AG04450 (cell line): ENCODE measurements at regions of chr6 and their contacts with region 1.

Region 1: DNA sequence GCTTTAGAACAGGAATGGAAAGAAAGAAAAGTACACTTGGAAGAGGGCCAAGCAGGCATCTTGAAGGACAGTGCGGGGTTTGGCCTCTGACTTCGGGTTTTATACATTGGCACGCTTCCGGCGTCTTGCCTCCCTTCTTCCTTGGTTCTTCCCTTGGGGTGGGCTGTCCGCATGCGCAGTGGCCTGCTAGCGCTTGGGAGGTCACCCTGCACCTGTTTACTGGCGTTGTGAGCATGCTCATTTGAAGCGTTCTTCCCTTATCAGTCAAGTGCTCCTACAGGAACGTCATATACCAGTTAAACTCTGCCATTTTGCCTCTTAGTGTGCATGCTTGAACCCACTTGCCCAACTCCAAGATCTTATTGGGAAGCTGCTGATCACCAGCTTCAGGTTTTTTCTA is 230.0 kb downstream of the TTLL2 start:
- DNase-seq: no peak
- H3K4me3 ChIP-seq: no peak overlapping the region
- H3K27ac ChIP-seq: no peak overlapping the region
- H3K27me3 ChIP-seq: no peaks in the 10 kb centered on the region
- CTCF ChIP-seq: no peak

Region 2: DNA sequence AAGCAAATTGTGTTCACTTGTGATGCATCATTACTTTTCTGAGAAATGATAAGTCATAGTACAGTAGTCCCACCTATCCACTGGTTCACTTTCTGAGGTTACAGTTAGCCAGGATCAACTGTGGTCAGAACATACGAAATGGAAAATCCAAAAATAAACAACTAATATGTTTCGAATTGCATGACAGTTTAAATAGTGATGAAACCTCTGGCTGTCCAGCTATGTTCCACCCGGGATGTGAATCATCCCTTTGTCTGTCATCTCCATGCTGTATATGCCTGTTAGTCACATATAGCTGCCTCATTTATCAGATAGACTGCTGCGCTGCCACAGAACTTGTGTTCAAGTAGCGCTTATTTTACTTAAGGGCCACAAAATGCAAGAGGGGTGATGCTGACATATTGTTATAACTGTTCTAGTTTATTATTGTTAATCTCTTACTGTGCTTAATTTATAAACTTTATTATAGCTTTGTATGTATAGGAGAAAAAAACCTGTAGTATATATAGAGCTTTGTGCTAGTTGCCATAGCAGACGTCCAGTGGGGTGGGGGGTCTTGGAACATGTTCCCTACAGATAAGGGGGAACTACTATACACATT is 301.1 kb after region 1 on chr6:
- CTCF ChIA-PET with region 1: no interaction called
- POLR2A ChIA-PET with region 1: interaction called, 13 read pairs
- DNase-seq: peak; percentile 77
- H3K4me3 ChIP-seq: no peak overlapping the region
- H3K27ac ChIP-seq: peak overlapping the region; percentile 47
- H3K27me3 ChIP-seq: no peaks in the 10 kb centered on the region
- CTCF ChIP-seq: no peak